GM12878 (cell line): ENCODE measurements at regions of chr22 and their contacts with region 1.

Region 1: GRCh38 chr22:31496007-31496734 is at the start of gene SFI1:
- DNase-seq: peak; percentile 92
- ATAC-seq: peak; percentile 89
- H3K4me3 ChIP-seq: peak within 1 kb of the TSS; percentile 96
- H3K27ac ChIP-seq: peak within 1 kb of the TSS; percentile 96
- H3K4me1 ChIP-seq: peaks cover 33% of the 10 kb centered on the region
- H3K27me3 ChIP-seq: no peaks in the 10 kb centered on the region
- CTCF ChIP-seq: peak; percentile 21 to 34 (median 24); a peak in 3 of 6 replicates
- EP300 ChIP-seq: no peak
- POLR2A ChIP-seq: peak; percentile 83
- RAD21 ChIP-seq: 0 out of 2 replicates have a peak, but pooled peaks have one; percentile 18
- polyA plus RNA-seq, gene SFI1: 6.3 to 6.6 TPM

Region 2: GRCh38 chr22:31363885-31364465 is 132.2 kb before region 1 on chr22:
- CTCF ChIA-PET with region 1: no interaction called
- POLR2A ChIA-PET with region 1: no interaction called
- RAD21 ChIA-PET with region 1: no interaction called
- SMC1A ChIA-PET with region 1: no interaction called
- in situ Hi-C with region 1: no loop called
- intact Hi-C with region 1: no loop called
- DNase-seq: no peak
- ATAC-seq: no peak
- H3K4me3 ChIP-seq: no peak overlapping the region
- H3K27ac ChIP-seq: no peak overlapping the region
- H3K4me1 ChIP-seq: no peaks in the 10 kb centered on the region
- H3K27me3 ChIP-seq: no peaks in the 10 kb centered on the region
- CTCF ChIP-seq: no peak
- EP300 ChIP-seq: no peak
- POLR2A ChIP-seq: no peak
- RAD21 ChIP-seq: no peak

Region 3: DNA sequence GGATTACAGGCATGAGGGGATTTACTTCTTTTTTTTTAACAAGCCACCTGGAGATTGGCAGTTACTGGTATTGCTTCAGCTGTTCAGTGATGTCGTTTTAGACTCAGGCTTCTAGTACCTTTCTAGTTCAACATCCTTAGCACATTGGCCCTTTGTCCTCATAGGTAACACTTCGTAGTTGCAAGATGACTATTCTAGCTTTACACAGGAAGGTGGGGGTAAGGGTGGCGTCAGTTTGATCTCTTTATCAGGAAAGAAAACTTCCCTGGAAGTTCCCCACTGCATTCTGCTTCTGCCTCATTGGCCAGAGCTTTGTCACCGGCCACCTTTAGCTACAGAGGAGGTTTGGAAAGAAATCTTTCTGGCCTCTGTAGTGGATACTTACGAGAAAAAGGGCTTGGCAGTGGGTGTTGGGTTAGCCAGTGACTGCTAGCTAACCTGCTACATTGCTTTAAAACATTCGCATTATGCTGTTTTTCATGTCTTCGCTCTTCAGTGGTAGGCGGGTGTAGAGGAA is 40.9 kb after region 1 on chr22:
- CTCF ChIA-PET with region 1: interaction called, 13 read pairs
- POLR2A ChIA-PET with region 1: interaction called, 82 read pairs
- RAD21 ChIA-PET with region 1: interaction called, 15 read pairs
- SMC1A ChIA-PET with region 1: interaction called, 29 read pairs
- in situ Hi-C with region 1: no loop called
- intact Hi-C with region 1: loop called (anchors 5 kb)
- DNase-seq: peak; percentile 79
- ATAC-seq: peak; percentile 91
- H3K4me3 ChIP-seq: no peak overlapping the region
- H3K27ac ChIP-seq: peak overlapping the region; percentile 87
- H3K4me1 ChIP-seq: peaks cover 34% of the 10 kb centered on the region
- H3K27me3 ChIP-seq: no peaks in the 10 kb centered on the region
- CTCF ChIP-seq: no peak
- EP300 ChIP-seq: peak; percentile 82 to 88; a peak in 3 of 4 replicates
- POLR2A ChIP-seq: no peak
- RAD21 ChIP-seq: no peak

Region 4: DNA sequence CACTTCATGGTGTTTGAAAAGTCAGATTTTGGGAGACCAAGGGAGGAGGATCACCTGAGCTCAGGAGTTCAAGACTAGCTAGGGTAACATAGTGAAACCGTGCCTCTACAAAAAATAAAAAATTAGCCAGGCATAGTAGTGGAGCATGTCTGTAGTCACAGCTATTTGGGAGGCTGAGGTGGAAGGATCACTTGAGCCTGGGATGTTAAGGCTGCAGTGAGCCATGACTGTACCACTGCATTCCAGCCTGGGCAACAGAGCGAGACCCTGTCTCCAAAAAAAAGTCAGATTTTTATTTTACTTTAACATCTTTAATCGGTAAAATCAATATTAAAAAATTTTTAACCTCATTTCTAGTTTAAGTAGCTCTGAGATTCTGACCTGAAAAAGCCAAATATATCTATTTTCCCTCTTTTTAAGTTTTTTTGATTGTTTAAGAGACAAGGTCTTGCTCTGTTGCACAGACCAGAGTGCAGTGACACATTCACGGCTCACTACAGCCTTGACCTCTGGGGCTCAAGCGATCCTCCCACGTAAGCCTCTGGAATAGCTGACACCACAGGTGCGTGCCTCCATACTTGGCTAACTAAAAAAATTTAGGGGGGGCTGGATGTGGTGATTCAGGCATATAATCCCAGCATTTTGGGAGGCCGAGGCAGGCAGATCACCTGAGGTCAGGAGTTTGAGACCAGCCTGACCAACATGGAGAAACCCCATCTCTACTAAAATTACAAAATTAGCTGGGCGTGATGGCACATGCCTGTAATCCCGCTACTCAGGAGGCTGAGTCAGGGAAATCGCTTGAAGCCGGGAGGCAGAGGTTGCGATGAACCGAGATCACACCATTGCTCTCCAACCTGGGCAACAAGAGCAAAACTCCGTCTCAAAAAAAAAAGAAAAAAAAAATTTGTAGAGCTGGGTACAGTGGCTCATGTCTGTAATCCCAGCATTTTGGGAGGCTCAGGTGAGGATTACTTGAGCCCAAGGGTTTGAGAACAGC is 48.6 kb after region 1 on chr22:
- CTCF ChIA-PET with region 1: interaction called, 10 read pairs
- POLR2A ChIA-PET with region 1: interaction called, 82 read pairs
- RAD21 ChIA-PET with region 1: interaction called, 14 read pairs
- SMC1A ChIA-PET with region 1: interaction called, 29 read pairs
- in situ Hi-C with region 1: no loop called
- intact Hi-C with region 1: loop called (anchors 2 kb)
- DNase-seq: no peak
- ATAC-seq: no peak
- H3K4me3 ChIP-seq: no peak overlapping the region
- H3K27ac ChIP-seq: peak overlapping the region; percentile 61
- H3K4me1 ChIP-seq: peaks cover 15% of the 10 kb centered on the region
- H3K27me3 ChIP-seq: no peaks in the 10 kb centered on the region
- CTCF ChIP-seq: no peak
- EP300 ChIP-seq: no peak
- POLR2A ChIP-seq: no peak
- RAD21 ChIP-seq: no peak

Region 5: GRCh38 chr22:31630331-31631329 is 134.5 kb after region 1 on chr22:
- CTCF ChIA-PET with region 1: interaction called, 8 read pairs
- POLR2A ChIA-PET with region 1: interaction called, 4 read pairs
- RAD21 ChIA-PET with region 1: no interaction called
- SMC1A ChIA-PET with region 1: interaction called, 4 read pairs
- in situ Hi-C with region 1: loop called (anchors 5 kb)
- intact Hi-C with region 1: loop called (anchors 5 kb)
- DNase-seq: no peak
- ATAC-seq: peak; percentile 81
- H3K4me3 ChIP-seq: peak overlapping the region; percentile 93
- H3K27ac ChIP-seq: peak overlapping the region; percentile 83
- H3K4me1 ChIP-seq: peaks cover 38% of the 10 kb centered on the region
- H3K27me3 ChIP-seq: no peaks in the 10 kb centered on the region
- CTCF ChIP-seq: peak in 1 of 3 experiments; percentile 17; a peak in 2 of 6 replicates
- EP300 ChIP-seq: no peak
- POLR2A ChIP-seq: peak; percentile 58; the same call in 1 of the 2 replicates
- RAD21 ChIP-seq: no peak